ENCODE measurements at regions of chr20 and their contacts with region 1.

Region 1: GRCh38 chr20:19205977-19206396 is 6.5 kb upstream of the SLC24A3 start:
- DNase-seq: peak; percentile 69
- CTCF ChIP-seq: peak; percentile 92

Region 2: GRCh38 chr20:18412221-18412901 is 793.6 kb before region 1 on chr20:
- in situ Hi-C with region 1: loop called (anchors 25 kb)
- DNase-seq: no peak
- CTCF ChIP-seq: no peak

Region 3: GRCh38 chr20:19583532-19584175 is 377.7 kb after region 1 on chr20:
- in situ Hi-C with region 1: loop called (anchors 10 kb)
- DNase-seq: peak; percentile 73
- CTCF ChIP-seq: peak; percentile 82

Region 4: DNA sequence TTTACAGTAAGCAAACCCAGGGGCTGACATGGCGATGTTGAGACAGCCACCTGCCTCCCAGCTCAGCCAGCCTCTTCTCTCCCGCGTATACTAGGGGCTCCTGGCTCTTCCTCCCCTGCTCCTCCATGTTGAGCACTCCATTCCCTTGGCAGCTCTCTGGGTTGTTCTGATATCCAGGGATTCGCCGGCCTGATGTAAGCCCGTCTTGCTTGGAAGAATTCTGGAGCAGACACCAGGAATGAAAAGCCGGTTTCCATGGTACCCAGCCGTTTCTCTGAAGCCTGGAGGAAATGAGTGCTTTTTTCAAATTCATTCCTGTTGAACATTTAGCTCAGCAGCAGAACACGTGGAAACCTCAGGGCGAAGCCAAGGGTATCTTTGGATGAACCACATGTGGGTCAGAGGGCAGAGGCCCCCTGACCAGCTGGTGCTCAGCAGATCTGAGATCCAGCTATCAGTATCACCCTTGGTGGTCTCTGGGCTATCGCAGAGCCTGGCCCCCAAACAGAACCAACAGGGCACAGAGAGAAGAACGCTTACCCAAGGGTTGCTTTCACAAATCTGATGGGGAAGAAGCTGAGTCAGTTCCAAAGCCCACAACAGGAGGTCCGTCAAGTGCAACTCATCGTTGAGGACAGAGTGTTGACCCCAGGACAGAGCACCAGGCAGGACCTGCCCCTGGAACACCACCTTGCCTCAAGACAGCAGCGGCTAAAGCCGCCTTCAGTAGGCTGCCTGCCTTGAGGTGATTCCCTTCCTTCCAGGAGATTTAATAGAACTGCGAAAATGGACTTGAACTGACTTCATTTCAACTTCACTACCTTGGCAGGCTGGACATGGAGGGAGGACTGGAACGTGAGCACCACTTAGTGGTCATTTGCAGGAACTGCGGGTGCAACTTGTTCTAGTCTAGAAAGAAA is 456.0 kb after region 1 on chr20:
- in situ Hi-C with region 1: loop called (anchors 25 kb)
- DNase-seq: peak; percentile 57
- CTCF ChIP-seq: peak; percentile 95

Measured in GM13977 (cell line).